ENCODE measurements at regions of chr3 and their contacts with region 1.

Region 1: GRCh38 chr3:151086484-151087456 is 1.3 kb downstream of the MED12L start:
- DNase-seq: peak; percentile 87
- H3K4me3 Mint-ChIP-seq: peak overlapping the region; percentile 82
- H3K27ac Mint-ChIP-seq: no peak overlapping the region
- H3K4me1 Mint-ChIP-seq: peaks cover 9% of the 10 kb centered on the region
- H3K27me3 Mint-ChIP-seq: peaks cover 46% of the 10 kb centered on the region

Region 2: GRCh38 chr3:150528354-150528797 is 558.4 kb before region 1 on chr3:
- CTCF ChIA-PET with region 1: no interaction called
- intact Hi-C with region 1: loop called (anchors 1 kb)
- DNase-seq: no peak
- H3K4me3 Mint-ChIP-seq: no peak overlapping the region
- H3K27ac Mint-ChIP-seq: no peak overlapping the region
- H3K4me1 Mint-ChIP-seq: peaks cover 8% of the 10 kb centered on the region
- H3K27me3 Mint-ChIP-seq: no peaks in the 10 kb centered on the region

Region 3: DNA sequence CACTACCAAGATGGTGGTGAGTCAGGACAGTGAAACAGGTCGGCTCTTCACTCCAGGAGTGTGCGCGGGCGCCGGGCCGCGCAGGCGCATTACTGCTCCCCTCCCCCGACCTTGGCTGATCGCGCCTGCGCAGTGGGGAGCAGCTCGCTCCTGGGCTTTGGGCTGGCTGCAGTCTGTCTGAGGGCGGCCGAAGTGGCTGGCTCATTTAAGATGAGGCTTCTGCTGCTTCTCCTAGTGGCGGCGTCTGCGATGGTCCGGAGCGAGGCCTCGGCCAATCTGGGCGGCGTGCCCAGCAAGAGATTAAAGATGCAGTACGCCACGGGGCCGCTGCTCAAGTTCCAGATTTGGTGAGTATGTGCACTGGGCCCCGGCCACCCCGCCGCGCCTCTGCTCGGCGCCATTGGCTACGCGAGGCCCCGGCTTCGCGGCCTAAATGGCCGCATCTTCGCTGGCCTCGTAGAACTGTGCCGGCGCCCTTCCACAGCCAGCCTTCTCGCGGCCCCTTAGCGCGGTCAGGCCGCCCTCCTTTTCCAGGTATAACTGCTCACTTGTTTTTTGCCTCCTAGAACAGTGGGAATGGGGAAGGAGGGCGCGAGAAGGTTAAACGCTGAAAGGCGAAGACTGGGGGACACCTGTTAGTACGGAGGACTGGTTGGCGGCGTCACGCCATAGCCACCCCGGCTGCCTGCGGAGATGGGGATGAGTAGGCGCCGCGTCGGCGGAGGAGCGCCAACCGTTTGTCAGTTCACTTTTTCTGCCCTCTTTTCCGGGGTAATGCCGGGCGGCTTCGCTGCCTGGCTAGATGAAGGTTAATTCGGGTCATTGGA is 483.4 kb before region 1 on chr3 and contains the start of gene SELENOT:
- CTCF ChIA-PET with region 1: no interaction called
- intact Hi-C with region 1: loop called (anchors 5 kb)
- DNase-seq: peak; percentile 93
- H3K4me3 Mint-ChIP-seq: peak within 1 kb of the TSS; percentile 96
- H3K27ac Mint-ChIP-seq: peak within 1 kb of the TSS; percentile 97
- H3K4me1 Mint-ChIP-seq: peaks cover 59% of the 10 kb centered on the region
- H3K27me3 Mint-ChIP-seq: no peaks in the 10 kb centered on the region
- total RNA-seq, gene SELENOT: 68.4 to 71.2 TPM

Region 4: DNA sequence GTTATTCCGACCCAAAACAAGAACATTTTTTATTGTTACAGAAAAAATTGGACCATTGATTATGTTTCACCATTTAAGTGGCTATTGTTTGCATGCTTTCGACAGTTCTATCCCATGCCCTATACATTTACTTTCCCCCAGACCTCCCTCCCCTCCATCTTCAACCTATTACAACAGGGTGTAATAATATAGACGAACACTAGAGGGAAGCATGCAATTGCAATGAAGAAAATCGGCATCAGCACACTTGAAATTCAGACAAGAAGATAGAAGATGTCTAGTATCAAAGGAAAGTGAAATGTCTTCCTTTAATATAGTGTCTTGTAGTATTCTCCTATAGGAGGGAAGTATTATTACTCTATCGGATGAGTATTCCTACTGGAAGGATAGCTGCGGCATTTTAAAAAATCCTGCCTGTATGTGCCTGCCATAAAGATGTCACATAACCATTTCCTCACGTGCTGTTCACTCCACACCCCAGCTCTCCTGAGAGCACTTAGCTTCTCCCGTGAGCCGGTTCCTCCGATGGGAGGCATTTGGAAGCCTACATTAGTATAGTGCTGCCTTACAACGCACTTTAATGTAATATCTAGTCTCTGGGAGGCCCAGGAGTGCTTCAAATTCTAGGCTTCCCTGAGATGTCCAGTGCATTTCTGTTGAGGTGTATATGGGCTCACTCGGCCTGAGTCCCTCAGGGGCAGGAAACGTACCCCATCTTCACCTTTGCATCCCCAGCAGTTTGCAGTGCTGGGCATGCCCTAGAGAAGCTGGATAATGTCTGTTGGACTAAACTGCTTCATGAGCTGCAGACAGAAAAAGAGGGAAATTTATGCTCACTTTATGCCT is 365.3 kb before region 1 on chr3:
- CTCF ChIA-PET with region 1: no interaction called
- intact Hi-C with region 1: loop called (anchors 1 kb)
- DNase-seq: no peak
- H3K4me3 Mint-ChIP-seq: no peak overlapping the region
- H3K27ac Mint-ChIP-seq: no peak overlapping the region
- H3K4me1 Mint-ChIP-seq: peaks cover 28% of the 10 kb centered on the region
- H3K27me3 Mint-ChIP-seq: no peaks in the 10 kb centered on the region

Region 5: GRCh38 chr3:150996731-150997130 is 90.0 kb before region 1 on chr3:
- CTCF ChIA-PET with region 1: no interaction called
- intact Hi-C with region 1: no loop called
- DNase-seq: no peak
- H3K4me3 Mint-ChIP-seq: no peak overlapping the region
- H3K27ac Mint-ChIP-seq: no peak overlapping the region
- H3K4me1 Mint-ChIP-seq: no peaks in the 10 kb centered on the region
- H3K27me3 Mint-ChIP-seq: peaks cover 19% of the 10 kb centered on the region

Region 6: DNA sequence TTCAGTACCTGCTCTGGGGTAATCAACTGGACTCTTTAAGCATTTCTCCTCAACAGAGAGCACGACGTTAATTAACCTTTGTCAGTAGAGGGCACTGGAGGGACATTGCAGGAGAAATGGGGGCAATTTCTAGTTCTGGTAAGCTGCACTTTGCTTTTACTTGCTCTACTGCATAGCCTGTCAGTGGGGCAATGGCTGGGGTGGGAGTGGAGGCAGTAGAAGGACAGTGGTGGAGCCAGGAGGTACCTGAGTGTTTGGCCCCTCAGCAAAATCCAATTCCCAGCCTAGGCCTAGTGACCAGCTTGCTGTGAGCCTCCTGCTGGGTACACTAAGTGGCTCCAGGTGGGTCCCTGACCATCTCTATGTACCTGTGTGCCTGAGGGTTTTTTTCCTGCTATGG is 19.6 kb before region 1 on chr3:
- CTCF ChIA-PET with region 1: interaction called, 14 read pairs
- intact Hi-C with region 1: loop called (anchors 1 kb)
- DNase-seq: peak; percentile 10
- H3K4me3 Mint-ChIP-seq: no peak overlapping the region
- H3K27ac Mint-ChIP-seq: no peak overlapping the region
- H3K4me1 Mint-ChIP-seq: no peaks in the 10 kb centered on the region
- H3K27me3 Mint-ChIP-seq: peaks cover 9% of the 10 kb centered on the region

Region 7: GRCh38 chr3:151146071-151146730 is 59.4 kb after region 1 on chr3:
- CTCF ChIA-PET with region 1: interaction called, 10 read pairs
- intact Hi-C with region 1: loop called (anchors 1 kb)
- DNase-seq: peak; percentile 77
- H3K4me3 Mint-ChIP-seq: no peak overlapping the region
- H3K27ac Mint-ChIP-seq: no peak overlapping the region
- H3K4me1 Mint-ChIP-seq: no peaks in the 10 kb centered on the region
- H3K27me3 Mint-ChIP-seq: no peaks in the 10 kb centered on the region

Measured in activated naive CD4-positive, alpha-beta T cell treated with anti-CD3 and anti-CD28 coated beads for 36 hours (primary cell).